ENCODE measurements at regions of chr15 and their contacts with region 1.

Region 1: DNA sequence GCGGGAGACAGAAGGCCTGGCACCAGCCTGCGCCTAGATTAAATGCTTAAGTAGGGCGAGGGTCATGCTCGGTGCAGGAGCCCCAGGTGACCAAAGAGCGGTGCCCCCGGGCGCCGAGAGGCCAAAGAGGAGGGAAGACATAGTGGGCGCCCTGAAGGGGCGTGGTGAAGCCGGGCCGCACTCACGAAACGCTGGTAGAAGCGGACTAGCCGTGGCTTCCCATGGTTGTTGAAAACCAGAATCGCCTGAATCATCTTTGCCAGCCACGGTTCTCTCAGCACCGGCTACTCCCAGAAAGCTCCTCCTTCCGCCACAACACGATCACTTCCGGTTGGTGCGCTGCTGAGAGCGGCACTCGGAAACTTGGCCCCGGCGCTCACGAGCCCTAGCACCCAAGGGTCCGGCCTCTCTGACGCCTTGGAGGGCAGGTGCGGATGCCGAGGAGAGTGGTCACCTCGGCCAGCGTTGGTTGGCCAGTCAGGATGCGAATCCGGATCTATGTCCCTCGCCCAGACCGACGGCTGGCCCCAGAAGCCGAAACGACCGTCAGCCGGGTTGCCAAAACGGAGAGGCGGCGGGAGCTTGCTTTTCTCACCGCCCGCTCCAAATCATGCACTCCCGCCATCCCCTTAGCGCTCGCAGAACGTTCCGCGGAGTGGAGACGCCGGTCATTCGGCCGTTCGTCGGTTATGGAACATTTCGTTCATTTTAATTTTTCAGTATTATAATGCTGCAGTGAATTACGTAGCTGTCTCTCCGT is at the start of gene AP3S2:
- DNase-seq: peak; percentile 79 to 90 (median 86)
- ATAC-seq: peak; percentile 97
- H3K4me3 ChIP-seq: peak within 1 kb of the TSS; percentile 88
- H3K4me3 Mint-ChIP-seq: peak within 1 kb of the TSS; percentile 89 to 99 (median 96)
- H3K27ac ChIP-seq: peak within 1 kb of the TSS; percentile 81
- H3K27ac Mint-ChIP-seq: peak within 1 kb of the TSS; percentile 91 to 98 (median 95)
- H3K4me1 ChIP-seq: peaks cover 6 to 14% of the 10 kb centered on the region in 2 donors
- H3K4me1 Mint-ChIP-seq: peaks cover 17 to 46% (median 36%) of the 10 kb centered on the region in 7 donors
- H3K27me3 ChIP-seq: no peaks in the 10 kb centered on the region
- H3K27me3 Mint-ChIP-seq: no peaks in the 10 kb centered on the region
- total RNA-seq, gene AP3S2: 24.3 to 31.7 (median 28.4) TPM

Region 2: DNA sequence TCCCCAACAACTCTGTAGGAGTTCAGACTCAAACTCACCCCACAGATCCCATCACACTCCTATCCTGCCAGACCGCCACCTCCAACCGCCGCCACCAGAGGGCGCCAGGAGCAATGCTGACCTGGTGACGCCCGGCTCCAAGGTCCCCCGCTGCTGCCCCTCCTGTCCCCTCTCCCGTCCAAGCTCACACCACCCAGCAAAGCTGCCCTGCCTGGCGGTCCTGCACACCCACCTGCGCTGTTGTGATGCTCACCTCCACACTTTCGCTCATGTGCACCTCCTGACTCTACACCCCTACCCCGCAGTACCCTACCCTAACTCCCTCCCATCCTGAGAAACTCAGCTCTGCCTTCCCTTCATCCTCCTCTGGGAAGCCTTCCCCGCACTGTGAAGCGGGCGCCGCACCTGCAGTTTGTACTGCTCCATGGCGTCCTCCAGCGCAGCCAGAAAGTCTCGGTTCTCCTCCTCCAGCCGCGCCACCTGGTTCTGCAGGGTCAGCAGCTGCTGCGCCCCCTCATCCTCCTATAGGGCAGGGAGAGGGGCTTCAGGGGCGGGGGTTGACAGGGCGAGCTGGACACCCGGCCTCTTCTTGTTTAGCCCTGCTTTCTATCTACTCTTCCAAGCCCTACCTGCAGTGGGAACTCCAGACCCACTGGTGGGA is 246.6 kb before region 1 on chr15:
- CTCF ChIA-PET with region 1: no interaction called
- POLR2A ChIA-PET with region 1: no interaction called
- intact Hi-C with region 1: no loop called
- DNase-seq: peak in 7 of 9 donors; percentile 13 to 79 (median 31)
- ATAC-seq: peak; percentile 71
- H3K4me3 ChIP-seq: no peak overlapping the region
- H3K4me3 Mint-ChIP-seq: peak overlapping the region in 1 of 10 donors; percentile 47
- H3K27ac ChIP-seq: no peak overlapping the region
- H3K27ac Mint-ChIP-seq: no peak overlapping the region
- H3K4me1 ChIP-seq: no peaks in the 10 kb centered on the region
- H3K4me1 Mint-ChIP-seq: peaks cover 0 to 4% (median 0%) of the 10 kb centered on the region in 7 donors
- H3K27me3 ChIP-seq: no peaks in the 10 kb centered on the region
- H3K27me3 Mint-ChIP-seq: peaks cover 0 to 26% (median 3%) of the 10 kb centered on the region in 5 donors

Region 3: DNA sequence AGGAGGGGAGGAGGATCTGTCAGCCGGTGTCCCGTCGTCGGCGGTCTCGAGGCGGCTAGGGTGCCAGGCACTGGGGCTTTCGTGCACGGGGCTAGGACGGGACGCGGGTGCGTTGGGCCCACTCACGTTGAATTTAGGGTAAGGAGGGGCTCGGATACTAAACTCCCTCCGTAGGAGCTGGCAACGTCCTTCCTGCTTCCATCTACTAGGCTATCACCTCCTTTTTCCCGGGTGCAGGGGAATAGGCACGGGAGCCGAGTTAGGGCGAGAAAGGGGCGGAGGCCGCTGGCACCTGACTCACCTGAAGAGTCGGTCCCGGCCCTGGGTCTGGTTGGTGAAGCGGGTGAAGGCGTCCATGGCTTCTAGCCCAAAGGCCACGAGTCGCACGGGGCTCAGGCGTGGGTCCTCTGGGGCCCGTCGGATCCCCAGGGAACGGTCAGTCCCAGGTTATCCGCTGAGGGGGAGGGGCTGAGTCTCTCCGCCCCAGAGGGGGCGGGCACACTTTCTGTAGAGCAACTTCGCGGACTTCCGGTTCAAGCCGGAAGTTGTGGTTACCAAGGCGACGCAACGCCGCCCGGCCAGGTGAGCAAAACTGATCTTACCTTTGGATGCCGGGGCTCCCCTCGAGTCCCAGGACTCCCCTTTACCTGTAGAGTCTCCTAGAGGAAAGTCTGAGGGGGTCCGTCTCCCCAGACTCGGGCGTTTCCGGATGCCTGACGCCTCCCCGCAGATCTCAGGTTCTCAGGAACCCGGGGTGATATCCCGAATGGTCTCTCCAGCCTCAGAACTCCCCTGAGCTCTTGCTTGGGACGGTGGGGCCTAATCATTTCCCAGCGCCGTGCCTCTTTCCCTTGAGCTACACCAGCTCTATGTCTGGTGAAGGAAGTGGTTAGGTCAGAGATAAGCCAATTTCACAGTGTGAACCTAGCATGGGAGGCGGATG is 203.3 kb before region 1 on chr15 and contains the starts of genes PEX11A and WDR93:
- CTCF ChIA-PET with region 1: no interaction called
- POLR2A ChIA-PET with region 1: no interaction called
- intact Hi-C with region 1: loop called (anchors 1 kb)
- DNase-seq: peak; percentile 59 to 80 (median 74)
- ATAC-seq: peak; percentile 93
- H3K4me3 ChIP-seq: peak within 1 kb of the TSS; percentile 92
- H3K4me3 Mint-ChIP-seq: peak within 1 kb of the TSS; percentile 78 to 94 (median 92)
- H3K27ac ChIP-seq: peak within 1 kb of the TSS; percentile 56
- H3K27ac Mint-ChIP-seq: peak within 1 kb of the TSS; percentile 74 to 93 (median 89)
- H3K4me1 ChIP-seq: peaks cover 0 to 3% of the 10 kb centered on the region in 2 donors
- H3K4me1 Mint-ChIP-seq: peaks cover 13 to 24% (median 15%) of the 10 kb centered on the region in 7 donors
- H3K27me3 ChIP-seq: no peaks in the 10 kb centered on the region
- H3K27me3 Mint-ChIP-seq: peaks cover 0 to 11% (median 0%) of the 10 kb centered on the region in 5 donors
- total RNA-seq, gene PEX11A: 0.92 to 4.6 (median 2.0) TPM
- total RNA-seq, gene WDR93: 0.27 TPM in 1 of 5 experiments, not detected in the others

Region 4: DNA sequence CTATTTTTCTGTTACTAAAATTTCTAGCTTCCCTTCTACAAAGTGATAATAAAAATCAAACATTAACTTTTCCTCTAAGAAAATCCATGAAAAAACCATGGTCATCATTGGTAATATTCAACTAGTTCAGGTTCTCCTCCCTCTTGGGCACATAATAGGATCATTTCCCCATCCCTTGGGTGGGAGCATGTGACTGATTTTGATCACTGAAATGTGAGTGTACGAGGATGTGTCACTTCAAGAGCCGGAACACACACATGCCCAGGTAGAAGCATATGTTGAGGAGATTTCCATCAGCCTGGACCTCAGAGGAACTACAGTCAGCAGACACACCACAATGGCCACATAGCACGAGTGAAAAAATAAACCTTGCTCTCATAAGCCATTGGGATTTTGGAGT is 36.2 kb before region 1 on chr15:
- CTCF ChIA-PET with region 1: no interaction called
- POLR2A ChIA-PET with region 1: no interaction called
- intact Hi-C with region 1: no loop called
- DNase-seq: no peak
- ATAC-seq: no peak
- H3K4me3 ChIP-seq: no peak overlapping the region
- H3K4me3 Mint-ChIP-seq: no peak overlapping the region
- H3K27ac ChIP-seq: no peak overlapping the region
- H3K27ac Mint-ChIP-seq: peak overlapping the region in 1 of 9 donors; percentile 67
- H3K4me1 ChIP-seq: no peaks in the 10 kb centered on the region
- H3K4me1 Mint-ChIP-seq: peaks cover 0 to 9% (median 0%) of the 10 kb centered on the region in 7 donors
- H3K27me3 ChIP-seq: no peaks in the 10 kb centered on the region
- H3K27me3 Mint-ChIP-seq: no peaks in the 10 kb centered on the region

Region 5: GRCh38 chr15:89874926-89875564 is 18.8 kb before region 1 on chr15:
- CTCF ChIA-PET with region 1: interaction called, 5 read pairs
- POLR2A ChIA-PET with region 1: interaction called, 9 read pairs
- intact Hi-C with region 1: loop called in 1 of 2 experiments (anchors 1 kb)
- DNase-seq: peak; percentile 58 to 80 (median 74)
- ATAC-seq: peak; percentile 99
- H3K4me3 ChIP-seq: no peak overlapping the region
- H3K4me3 Mint-ChIP-seq: peak overlapping the region in 1 of 10 donors; percentile 21
- H3K27ac ChIP-seq: no peak overlapping the region
- H3K27ac Mint-ChIP-seq: peak overlapping the region in 4 of 9 donors; percentile 34 to 77 (median 48)
- H3K4me1 ChIP-seq: no peaks in the 10 kb centered on the region
- H3K4me1 Mint-ChIP-seq: peaks cover 0 to 7% (median 5%) of the 10 kb centered on the region in 7 donors
- H3K27me3 ChIP-seq: no peaks in the 10 kb centered on the region
- H3K27me3 Mint-ChIP-seq: no peaks in the 10 kb centered on the region

Region 6: DNA sequence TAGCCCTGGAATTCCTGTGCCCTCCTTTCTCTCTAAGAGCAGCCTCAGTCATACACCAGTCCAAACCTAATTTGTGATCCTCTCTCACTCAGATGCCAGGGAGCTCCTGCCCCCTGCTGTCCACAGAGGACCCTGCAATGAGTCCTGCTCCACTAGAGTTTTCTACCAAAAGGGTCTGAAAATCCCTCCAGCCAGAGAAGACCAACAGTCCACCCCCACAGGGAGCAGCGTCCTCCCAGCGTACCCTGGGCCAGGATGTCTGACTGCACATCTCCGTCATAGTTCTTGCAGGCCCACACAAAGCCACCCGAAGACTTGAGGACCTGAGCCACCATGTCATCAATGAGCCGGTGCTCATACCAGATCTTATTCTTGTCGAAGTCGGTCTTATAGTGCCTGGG is 193.0 kb after region 1 on chr15:
- CTCF ChIA-PET with region 1: interaction called, 4 read pairs
- POLR2A ChIA-PET with region 1: interaction called, 3 read pairs
- intact Hi-C with region 1: loop called (anchors 1 kb)
- DNase-seq: peak in 8 of 9 donors; percentile 17 to 57 (median 43)
- ATAC-seq: peak; percentile 83
- H3K4me3 ChIP-seq: no peak overlapping the region
- H3K4me3 Mint-ChIP-seq: no peak overlapping the region
- H3K27ac ChIP-seq: no peak overlapping the region
- H3K27ac Mint-ChIP-seq: peak overlapping the region; percentile 23 to 91 (median 72)
- H3K4me1 ChIP-seq: no peaks in the 10 kb centered on the region
- H3K4me1 Mint-ChIP-seq: peaks cover 0 to 21% (median 10%) of the 10 kb centered on the region in 7 donors
- H3K27me3 ChIP-seq: no peaks in the 10 kb centered on the region
- H3K27me3 Mint-ChIP-seq: no peaks in the 10 kb centered on the region

Measured in naive thymus-derived CD4-positive, alpha-beta T cell (primary cell).